Esophagus muscularis mucosa (tissue), 4 donors: ENCODE measurements at regions of chr10 and their contacts with region 1.

Region 1: GRCh38 chr10:69092959-69093850 is 5.3 kb downstream of the SRGN start:
- DNase-seq: no peak
- H3K4me3 ChIP-seq: no peak overlapping the region
- H3K27ac ChIP-seq: peak overlapping the region in 1 of 4 donors; percentile 11
- H3K4me1 ChIP-seq: peaks cover 0 to 12% (median 8%) of the 10 kb centered on the region in 4 donors
- H3K27me3 ChIP-seq: no peaks in the 10 kb centered on the region
- CTCF ChIP-seq: peak; percentile 74 to 81 (median 77)
- EP300 ChIP-seq: no peak
- POLR2A ChIP-seq: no peak

Region 2: GRCh38 chr10:69004821-69005220 is 88.4 kb before region 1 on chr10:
- intact Hi-C with region 1: loop called (anchors 5 kb)
- DNase-seq: no peak
- H3K4me3 ChIP-seq: no peak overlapping the region
- H3K27ac ChIP-seq: no peak overlapping the region
- H3K4me1 ChIP-seq: peaks cover 0 to 12% (median 6%) of the 10 kb centered on the region in 4 donors
- H3K27me3 ChIP-seq: no peaks in the 10 kb centered on the region
- CTCF ChIP-seq: peak; percentile 38 to 52 (median 41)
- EP300 ChIP-seq: no peak
- POLR2A ChIP-seq: no peak

Region 3: DNA sequence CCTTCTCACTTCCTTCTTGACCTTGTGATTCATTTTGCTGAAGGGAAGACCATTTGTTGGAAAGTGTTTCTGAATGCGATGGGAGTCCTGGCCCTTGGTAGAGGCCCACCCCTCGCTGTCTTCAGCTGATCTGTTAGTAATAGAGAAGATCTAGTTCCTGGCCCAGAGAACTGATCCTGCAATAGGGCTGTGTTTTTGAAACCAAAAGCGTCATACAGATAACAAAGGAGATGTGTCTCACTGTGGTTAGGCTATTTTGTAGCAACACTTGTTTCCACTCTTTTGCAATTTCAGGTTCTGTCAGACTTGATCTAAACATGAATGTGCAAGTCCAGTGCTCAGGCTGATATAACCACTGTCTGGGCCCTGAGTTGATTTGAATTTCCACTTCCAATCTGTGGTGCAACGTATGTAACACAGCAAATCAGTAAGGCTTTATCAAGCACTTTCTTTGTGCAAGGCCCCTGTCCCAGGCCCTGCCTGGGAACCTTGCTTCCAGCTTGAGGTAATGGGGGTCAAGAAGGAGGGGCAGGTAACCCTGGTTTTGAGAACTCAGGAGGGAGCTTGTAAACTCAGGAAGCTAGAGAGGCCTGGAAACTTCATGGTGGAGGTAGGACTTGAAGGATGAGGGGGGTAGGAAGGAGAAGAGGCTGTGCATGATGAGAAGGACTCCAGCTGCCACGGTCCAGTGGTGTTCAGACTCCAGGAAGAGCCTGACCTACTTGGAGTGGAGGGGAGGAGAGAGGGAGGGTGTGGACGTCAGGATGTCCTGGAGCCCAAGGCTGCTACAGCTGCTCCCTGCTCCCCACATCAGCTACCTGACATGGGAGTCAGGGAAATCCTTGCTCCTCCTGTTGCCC is 47.5 kb before region 1 on chr10:
- intact Hi-C with region 1: no loop called
- DNase-seq: no peak
- H3K4me3 ChIP-seq: no peak overlapping the region
- H3K27ac ChIP-seq: peak overlapping the region in 2 of 4 donors; percentile 38 to 50
- H3K4me1 ChIP-seq: peaks cover 0 to 5% (median 0%) of the 10 kb centered on the region in 4 donors
- H3K27me3 ChIP-seq: no peaks in the 10 kb centered on the region
- CTCF ChIP-seq: no peak
- EP300 ChIP-seq: no peak
- POLR2A ChIP-seq: no peak